Left ventricle myocardium superior (tissue), 1 donor: ENCODE measurements at regions of chr12 and their contacts with region 1.

Region 1: GRCh38 chr12:121334513-121335343 is 17.5 kb downstream of the ANAPC5 start:
- DNase-seq: no peak
- ATAC-seq: peak; percentile 84

Region 2: DNA sequence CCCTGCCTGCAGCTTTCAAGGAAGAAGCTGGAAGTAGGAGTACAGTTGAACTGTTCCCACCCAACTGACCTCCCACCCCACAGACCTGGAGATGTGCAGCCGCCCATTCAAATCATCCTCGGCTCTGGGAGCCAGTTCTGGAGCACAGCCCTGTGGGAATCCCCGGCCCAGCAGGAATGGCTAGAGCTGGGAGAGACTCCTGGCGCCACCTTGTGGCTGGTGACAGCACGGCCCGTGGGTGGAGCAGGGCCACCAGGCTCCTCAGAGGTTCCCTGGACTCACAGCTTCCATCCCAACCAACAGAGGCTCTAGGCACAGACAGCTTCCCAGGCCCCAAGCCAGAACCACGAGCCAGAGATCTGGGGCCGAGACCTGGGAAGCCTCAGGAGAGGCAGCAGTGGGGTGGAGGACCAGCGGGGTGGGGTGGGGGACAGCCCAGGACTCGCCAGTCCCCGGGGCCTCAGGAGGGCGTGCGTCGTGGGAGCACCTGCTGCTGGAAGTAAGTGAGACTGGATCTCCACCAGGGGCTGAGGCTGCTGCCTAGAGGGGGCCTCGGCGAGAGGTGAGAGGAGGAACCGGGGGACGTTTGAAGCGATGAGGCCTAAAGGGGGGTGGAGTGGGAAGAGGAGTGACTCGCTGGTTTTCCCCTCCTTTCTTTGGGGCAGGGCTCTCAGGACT is 108.6 kb after region 1 on chr12:
- intact Hi-C with region 1: loop called (anchors 10 kb)
- DNase-seq: peak; percentile 91
- ATAC-seq: peak; percentile 93